ENCODE measurements at regions of chr1 and their contacts with region 1.

Region 1: DNA sequence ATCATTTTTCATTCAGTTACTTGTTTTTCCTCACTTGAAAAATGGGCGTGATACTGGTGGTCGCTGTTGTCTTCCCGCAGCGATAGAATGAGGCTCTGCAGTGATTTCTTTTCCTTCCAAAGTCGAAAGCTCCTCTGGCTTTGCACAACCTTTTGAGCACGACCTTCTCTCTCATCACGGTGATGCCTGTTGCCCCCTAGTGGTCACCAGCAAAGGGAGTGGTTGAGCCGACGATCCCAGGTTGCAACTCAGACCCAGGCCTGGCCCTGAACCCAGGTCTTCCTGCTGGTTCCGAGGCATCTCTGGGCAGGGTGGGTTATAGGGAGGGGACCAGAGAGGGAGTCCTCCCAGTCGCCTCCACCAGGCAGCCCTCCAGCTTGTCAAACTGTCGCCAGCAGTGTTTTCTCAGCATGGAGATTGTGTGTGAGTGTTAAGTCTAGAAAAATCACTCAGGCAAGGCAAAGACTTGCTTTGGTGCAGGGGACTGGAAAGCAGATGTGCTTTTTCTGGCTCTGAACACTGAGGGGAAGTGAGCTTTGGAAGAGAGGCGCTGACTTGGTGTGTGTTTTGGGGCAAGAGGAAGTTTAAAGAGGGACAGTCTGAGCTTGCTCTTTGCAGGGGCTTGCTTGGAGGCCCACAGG is 285.3 kb downstream of the CAMTA1 start:
- DNase-seq: peak; percentile 87
- H3K4me3 ChIP-seq: no peak overlapping the region; a peak in 1 of 4 replicates
- H3K27ac ChIP-seq: no peak overlapping the region
- H3K4me1 ChIP-seq: no peaks in the 10 kb centered on the region; a peak in 1 of 4 replicates
- H3K27me3 ChIP-seq: no peaks in the 10 kb centered on the region
- CTCF ChIP-seq: peak; percentile 72
- EP300 ChIP-seq: no peak
- RAD21 ChIP-seq: peak; percentile 84

Region 2: DNA sequence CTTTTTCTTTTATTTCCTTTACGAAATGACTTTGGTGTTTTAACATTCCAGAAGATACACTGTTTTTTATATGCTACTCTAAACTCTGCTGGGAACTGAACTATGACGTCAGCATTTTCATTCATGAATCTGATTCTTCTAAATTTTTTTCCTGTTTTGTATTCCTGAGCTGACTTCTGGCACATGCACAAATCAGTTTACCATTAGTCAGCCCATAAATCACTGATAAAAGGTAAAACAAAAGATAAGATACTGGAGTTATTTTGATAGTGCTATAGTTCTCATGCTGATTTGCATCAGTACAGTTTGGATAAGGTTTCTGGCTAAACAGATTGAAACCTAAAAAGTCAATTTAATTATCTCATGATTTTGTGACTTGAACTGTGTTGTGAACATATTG is 274.8 kb before region 1 on chr1:
- CTCF ChIA-PET with region 1: interaction called, 17 read pairs
- POLR2A ChIA-PET with region 1: no interaction called
- DNase-seq: no peak
- H3K4me3 ChIP-seq: no peak overlapping the region
- H3K27ac ChIP-seq: peak overlapping the region in 1 of 2 experiments; percentile 75; a peak in 2 of 4 replicates
- H3K4me1 ChIP-seq: peaks cover 5 to 11% of the 10 kb centered on the region in 2 experiments; a peak in 3 of 4 replicates
- H3K27me3 ChIP-seq: no peaks in the 10 kb centered on the region
- CTCF ChIP-seq: no peak
- EP300 ChIP-seq: peak in 1 of 2 experiments; percentile 29; a peak in 1 of 4 replicates
- RAD21 ChIP-seq: no peak

Region 3: GRCh38 chr1:7042322-7043190 is 28.0 kb before region 1 on chr1:
- CTCF ChIA-PET with region 1: interaction called, 51 read pairs
- POLR2A ChIA-PET with region 1: interaction called, 3 read pairs
- DNase-seq: peak; percentile 59
- H3K4me3 ChIP-seq: no peak overlapping the region
- H3K27ac ChIP-seq: no peak overlapping the region
- H3K4me1 ChIP-seq: peaks cover 0 to 27% of the 10 kb centered on the region in 2 experiments; a peak in 2 of 4 replicates
- H3K27me3 ChIP-seq: no peaks in the 10 kb centered on the region
- CTCF ChIP-seq: peak; percentile 70
- EP300 ChIP-seq: no peak
- RAD21 ChIP-seq: peak; percentile 71

Region 4: DNA sequence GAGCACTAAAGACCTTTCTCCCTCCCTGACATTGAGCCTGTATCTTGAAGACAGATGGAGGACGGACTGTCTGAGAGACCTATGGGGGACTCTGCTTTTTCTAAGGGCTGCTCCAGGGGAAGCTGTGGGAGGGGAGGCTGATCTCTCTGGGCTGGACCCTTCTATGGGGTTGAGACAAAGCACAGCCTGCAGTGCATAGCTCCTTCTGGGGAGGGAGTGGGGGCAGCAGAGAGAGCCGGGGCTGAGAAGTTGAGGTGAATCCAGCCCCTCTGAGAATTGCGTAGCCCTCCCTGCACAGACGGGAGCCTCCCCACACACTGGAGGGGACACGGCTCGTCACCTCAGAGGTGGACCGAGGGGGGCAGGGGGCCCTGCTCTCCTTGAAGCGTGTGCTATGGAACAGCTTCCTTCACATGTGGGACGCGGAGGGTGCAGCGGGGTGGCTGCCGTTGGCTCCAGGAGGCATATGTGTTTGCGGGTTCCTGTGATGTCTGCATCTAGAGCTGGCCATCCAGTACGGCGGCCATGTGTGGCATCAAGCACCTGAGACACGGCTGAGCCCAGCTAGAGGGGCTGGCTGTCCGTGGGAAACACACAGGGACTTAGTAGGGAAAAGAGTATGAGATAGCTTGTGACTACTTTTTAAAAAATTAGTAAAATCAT is 13.9 kb after region 1 on chr1:
- CTCF ChIA-PET with region 1: interaction called, 66 read pairs
- POLR2A ChIA-PET with region 1: no interaction called
- DNase-seq: no peak
- H3K4me3 ChIP-seq: no peak overlapping the region
- H3K27ac ChIP-seq: no peak overlapping the region
- H3K4me1 ChIP-seq: peaks cover 0 to 5% of the 10 kb centered on the region in 2 experiments; a peak in 1 of 4 replicates
- H3K27me3 ChIP-seq: no peaks in the 10 kb centered on the region
- CTCF ChIP-seq: no peak
- EP300 ChIP-seq: no peak
- RAD21 ChIP-seq: no peak

Region 5: DNA sequence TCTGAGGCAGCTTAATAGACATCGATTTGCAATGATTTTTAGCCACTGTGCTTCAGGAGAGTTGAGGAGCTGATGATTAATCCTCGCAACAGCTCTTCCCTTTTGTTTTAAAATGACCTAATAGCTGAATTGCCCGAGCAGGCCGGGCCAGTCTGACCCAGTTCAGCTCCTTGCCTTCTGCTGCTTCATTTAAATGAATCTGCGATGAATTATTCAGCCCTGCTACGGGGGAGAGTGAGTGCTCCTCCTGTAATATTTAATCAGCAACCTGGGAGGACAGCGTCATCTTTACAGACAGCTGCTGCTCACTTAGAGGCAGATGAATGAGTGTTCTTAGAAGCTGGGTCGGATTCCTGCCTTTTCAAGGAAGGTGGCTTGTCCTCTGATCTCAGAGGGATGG is 39.8 kb after region 1 on chr1:
- CTCF ChIA-PET with region 1: interaction called, 10 read pairs
- POLR2A ChIA-PET with region 1: no interaction called
- DNase-seq: no peak
- H3K4me3 ChIP-seq: no peak overlapping the region
- H3K27ac ChIP-seq: no peak overlapping the region
- H3K4me1 ChIP-seq: peaks cover 0 to 6% of the 10 kb centered on the region in 2 experiments; a peak in 1 of 4 replicates
- H3K27me3 ChIP-seq: no peaks in the 10 kb centered on the region
- CTCF ChIP-seq: no peak
- EP300 ChIP-seq: no peak
- RAD21 ChIP-seq: no peak